Pancreas (tissue), 10 donors: ENCODE measurements at regions of chr1 and their contacts with region 1.

Region 1: GRCh38 chr1:67535474-67535873 is 105.3 kb upstream of the SERBP1 start:
- DNase-seq: peak; percentile 60 to 87 (median 83)
- ATAC-seq: peak; percentile 78 to 89 (median 84)
- H3K4me3 ChIP-seq: no peak overlapping the region
- H3K27ac ChIP-seq: no peak overlapping the region
- H3K4me1 ChIP-seq: peaks cover 1 to 10% (median 5%) of the 10 kb centered on the region in 3 donors
- H3K27me3 ChIP-seq: no peaks in the 10 kb centered on the region
- CTCF ChIP-seq: peak; percentile 79 to 90 (median 86)

Region 2: DNA sequence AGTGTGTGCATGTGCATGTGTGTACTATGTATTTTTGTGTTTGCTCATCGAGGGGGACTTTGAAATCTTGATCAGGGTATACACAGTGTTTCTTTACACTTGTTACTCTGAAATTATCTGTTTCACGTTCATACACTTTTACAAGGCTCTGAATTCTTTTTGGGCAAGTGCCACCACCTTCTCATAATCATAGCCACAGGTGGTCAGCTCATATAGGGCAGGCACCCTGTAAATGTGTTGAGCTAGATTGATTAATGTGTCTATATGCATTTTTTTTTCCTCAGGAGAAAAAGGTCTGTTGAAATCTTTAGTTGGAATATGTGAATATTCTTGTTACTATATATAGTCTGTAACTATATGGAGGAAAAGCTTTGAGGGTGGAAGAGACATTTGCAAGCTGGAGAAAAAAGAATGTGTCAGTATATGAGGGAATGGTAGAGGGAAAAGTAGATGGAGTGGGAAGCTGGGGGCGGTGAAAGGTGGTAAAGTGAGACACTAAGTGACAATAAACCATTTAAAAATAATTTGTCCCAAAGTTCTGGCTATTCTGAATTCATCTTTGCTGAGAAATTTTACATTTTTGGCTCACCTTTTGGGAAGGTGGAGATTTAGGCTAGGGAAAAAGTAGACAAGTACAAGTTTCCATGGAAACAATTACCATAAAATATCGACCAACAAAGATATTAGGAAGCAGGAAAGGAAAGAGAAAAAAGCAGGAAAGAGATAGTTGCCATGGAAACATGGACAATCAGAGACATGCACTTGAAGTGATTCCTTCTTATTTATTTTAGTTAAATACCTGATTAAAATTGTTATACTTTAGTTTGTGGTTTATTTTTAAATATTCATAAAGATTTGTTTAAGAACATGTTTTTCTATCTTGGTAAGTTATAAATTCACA is 1465.2 kb before region 1 on chr1:
- intact Hi-C with region 1: no loop called
- DNase-seq: no peak
- ATAC-seq: no peak
- H3K4me3 ChIP-seq: no peak overlapping the region
- H3K27ac ChIP-seq: no peak overlapping the region
- H3K4me1 ChIP-seq: no peaks in the 10 kb centered on the region
- H3K27me3 ChIP-seq: no peaks in the 10 kb centered on the region
- CTCF ChIP-seq: no peak

Region 3: GRCh38 chr1:67479146-67479891 is 56.2 kb before region 1 on chr1:
- intact Hi-C with region 1: no loop called
- DNase-seq: peak; percentile 49 to 70 (median 54)
- ATAC-seq: peak; percentile 93 to 97 (median 95)
- H3K4me3 ChIP-seq: peak overlapping the region in 1 of 4 donors; percentile 3
- H3K27ac ChIP-seq: peak overlapping the region in 1 of 4 donors; percentile 27
- H3K4me1 ChIP-seq: peaks cover 0 to 5% (median 4%) of the 10 kb centered on the region in 3 donors
- H3K27me3 ChIP-seq: no peaks in the 10 kb centered on the region
- CTCF ChIP-seq: no peak

Region 4: GRCh38 chr1:67749844-67750689 is 214.6 kb after region 1 on chr1:
- intact Hi-C with region 1: loop called in 1 of 3 experiments (anchors 10 kb)
- DNase-seq: no peak
- ATAC-seq: peak; percentile 63 to 74 (median 68)
- H3K4me3 ChIP-seq: no peak overlapping the region
- H3K27ac ChIP-seq: peak overlapping the region; percentile 9 to 81 (median 50)
- H3K4me1 ChIP-seq: peaks cover 20 to 28% (median 27%) of the 10 kb centered on the region in 3 donors
- H3K27me3 ChIP-seq: no peaks in the 10 kb centered on the region
- CTCF ChIP-seq: no peak

Region 5: DNA sequence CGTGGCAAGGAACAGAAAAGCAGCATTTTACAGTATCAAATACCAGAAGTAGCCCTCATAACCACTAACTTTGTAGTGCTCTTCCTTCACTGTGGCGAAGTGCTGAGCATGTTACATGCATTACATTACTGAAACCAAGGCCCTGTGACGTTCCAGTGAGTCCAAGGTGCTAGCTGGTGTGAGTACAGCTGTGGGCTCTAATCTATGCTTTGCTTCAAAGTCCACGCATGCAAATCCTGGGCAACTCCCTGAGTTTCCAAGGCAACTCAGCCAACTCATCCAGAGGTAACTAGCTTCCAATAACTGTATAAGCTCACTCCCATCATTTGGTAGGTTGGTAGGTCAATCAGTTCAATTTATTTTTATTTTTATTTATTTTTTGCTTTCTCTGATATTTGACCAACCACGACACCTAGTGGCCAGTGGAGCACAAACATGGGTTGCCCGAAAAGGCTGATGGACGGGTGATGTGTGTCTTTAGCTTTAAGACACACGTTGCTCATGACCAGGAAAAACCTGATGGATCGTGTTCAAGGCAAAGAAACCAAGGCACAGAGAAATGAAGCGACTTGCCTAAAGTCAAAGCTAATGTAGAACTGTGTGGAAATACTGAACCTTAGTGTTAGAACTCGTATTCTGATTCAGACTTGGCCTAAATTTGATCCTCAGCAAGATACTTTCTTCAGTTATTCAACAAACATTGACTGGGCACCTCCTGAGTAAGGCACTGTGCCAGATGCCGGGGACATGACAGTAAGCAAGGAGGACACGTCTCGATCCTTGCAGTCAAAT is 224.8 kb after region 1 on chr1:
- intact Hi-C with region 1: loop called in 2 of 3 experiments (anchors 10 kb)
- DNase-seq: peak in 4 of 6 donors; percentile 49 to 69 (median 61)
- ATAC-seq: peak; percentile 91 to 95 (median 93)
- H3K4me3 ChIP-seq: no peak overlapping the region
- H3K27ac ChIP-seq: peak overlapping the region; percentile 22 to 49 (median 42)
- H3K4me1 ChIP-seq: peaks cover 4 to 11% (median 6%) of the 10 kb centered on the region in 3 donors
- H3K27me3 ChIP-seq: no peaks in the 10 kb centered on the region
- CTCF ChIP-seq: peak; percentile 65 to 83 (median 74)

Region 6: DNA sequence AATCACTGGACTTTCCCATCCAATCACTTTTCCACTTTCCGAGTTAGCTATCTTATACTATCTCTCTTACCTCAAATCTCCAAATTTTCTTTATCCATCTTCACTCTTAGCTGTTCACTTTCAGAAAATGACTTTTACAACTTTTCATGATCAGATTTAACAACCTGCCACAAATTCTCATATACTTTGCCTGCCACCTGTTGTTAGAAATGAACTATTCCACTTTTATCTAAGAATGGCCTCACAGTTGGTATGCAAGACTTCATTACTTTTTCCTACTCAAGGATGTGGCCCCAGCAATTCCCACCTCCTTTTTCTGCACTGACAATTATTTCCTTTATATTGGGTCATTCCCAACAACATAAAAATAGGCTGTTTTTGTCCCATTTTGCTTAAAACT is 1055.0 kb after region 1 on chr1:
- intact Hi-C with region 1: no loop called
- DNase-seq: no peak
- ATAC-seq: no peak
- H3K4me3 ChIP-seq: no peak overlapping the region
- H3K27ac ChIP-seq: no peak overlapping the region
- H3K4me1 ChIP-seq: no peaks in the 10 kb centered on the region
- H3K27me3 ChIP-seq: no peaks in the 10 kb centered on the region
- CTCF ChIP-seq: no peak